ENCODE measurements at regions of chr16 and their contacts with region 1.

Region 1: DNA sequence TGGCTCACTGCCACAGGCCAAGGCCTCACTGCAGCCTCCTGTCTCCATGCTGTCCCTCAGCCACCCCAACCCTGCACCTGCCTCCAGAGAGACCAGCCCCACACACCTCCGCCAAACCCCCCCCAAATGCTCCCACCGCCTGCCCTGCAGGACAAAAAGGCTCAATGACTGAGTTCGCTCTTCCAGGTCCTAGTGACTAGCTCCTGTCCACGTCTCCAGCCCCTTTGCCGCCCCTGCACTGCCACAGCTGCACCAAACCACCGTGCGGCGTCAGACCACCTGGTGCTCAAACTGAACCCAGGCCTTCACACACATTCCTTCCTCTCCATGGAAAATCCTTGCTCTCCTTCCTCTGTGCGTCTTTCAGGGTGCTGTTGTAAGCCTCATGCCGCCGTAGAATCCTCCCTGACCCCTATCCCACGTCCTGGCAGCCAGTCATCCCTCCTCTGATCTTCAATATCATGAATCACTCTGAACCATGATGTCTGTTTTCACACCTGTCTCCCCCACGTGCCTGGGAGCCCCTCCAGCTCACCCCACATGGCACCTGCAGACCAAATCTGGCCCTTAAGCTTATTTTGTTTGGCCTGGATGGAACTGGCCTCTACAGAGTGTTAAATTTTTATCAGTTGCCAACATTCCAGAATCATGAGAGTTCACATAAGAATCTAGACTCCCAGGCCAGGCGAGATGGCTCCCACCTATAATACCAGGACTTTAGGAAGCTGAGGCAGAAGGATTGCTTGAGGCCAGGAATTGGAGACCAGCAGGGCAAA is 4.3 kb upstream of the GSG1L start:
- DNase-seq: no peak
- H3K4me3 ChIP-seq: no peak overlapping the region
- H3K27ac ChIP-seq: no peak overlapping the region
- H3K27me3 ChIP-seq: peaks cover 36% of the 10 kb centered on the region
- CTCF ChIP-seq: no peak

Region 2: GRCh38 chr16:27611340-27611739 is 456.5 kb before region 1 on chr16:
- CTCF ChIA-PET with region 1: interaction called, 7 read pairs
- POLR2A ChIA-PET with region 1: interaction called, 14 read pairs
- DNase-seq: no peak
- H3K4me3 ChIP-seq: no peak overlapping the region
- H3K27ac ChIP-seq: no peak overlapping the region
- H3K27me3 ChIP-seq: no peaks in the 10 kb centered on the region
- CTCF ChIP-seq: no peak

Region 3: DNA sequence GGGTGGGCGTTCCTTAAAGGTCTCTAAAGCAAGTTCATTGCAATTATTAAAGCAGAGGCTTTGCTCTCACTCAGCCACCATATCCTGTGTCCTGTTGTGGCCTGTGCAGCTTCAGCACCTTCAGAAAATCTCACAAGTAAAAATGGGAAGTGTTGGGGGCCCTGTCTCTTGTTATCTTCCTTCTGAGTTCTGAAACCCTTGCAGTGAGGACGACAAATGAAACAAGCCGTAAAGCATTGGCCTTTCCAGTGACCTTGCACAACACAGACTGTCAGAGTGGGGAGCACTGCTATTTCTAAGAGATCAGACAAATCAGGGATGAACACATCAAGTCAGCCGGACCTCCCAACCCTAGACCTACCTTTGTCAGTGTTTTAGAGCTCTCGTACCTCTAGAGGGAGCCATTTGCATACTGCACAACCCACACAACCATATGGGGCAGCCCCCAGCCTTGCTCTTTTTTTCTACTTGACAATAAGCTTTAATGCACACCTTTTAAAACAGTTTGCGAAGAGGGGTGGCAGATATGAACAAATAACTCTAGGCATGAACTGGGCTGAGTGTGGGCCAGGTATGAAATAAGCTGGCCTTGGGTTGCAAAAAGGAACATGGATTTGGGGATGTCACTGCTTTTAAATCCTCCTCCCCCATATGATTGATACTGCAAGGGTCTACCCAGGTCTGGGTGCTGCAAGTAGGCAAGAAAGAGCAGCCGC is 428.1 kb before region 1 on chr16:
- CTCF ChIA-PET with region 1: interaction called, 36 read pairs
- POLR2A ChIA-PET with region 1: no interaction called
- DNase-seq: peak; percentile 18
- H3K4me3 ChIP-seq: no peak overlapping the region
- H3K27ac ChIP-seq: no peak overlapping the region
- H3K27me3 ChIP-seq: no peaks in the 10 kb centered on the region
- CTCF ChIP-seq: peak; percentile 89

Region 4: GRCh38 chr16:27779641-27780164 is 288.1 kb before region 1 on chr16:
- CTCF ChIA-PET with region 1: interaction called, 69 read pairs
- POLR2A ChIA-PET with region 1: no interaction called
- DNase-seq: no peak
- H3K4me3 ChIP-seq: no peak overlapping the region
- H3K27ac ChIP-seq: no peak overlapping the region
- H3K27me3 ChIP-seq: no peaks in the 10 kb centered on the region
- CTCF ChIP-seq: peak; percentile 75

Region 5: GRCh38 chr16:27972500-27972899 is 95.3 kb before region 1 on chr16:
- CTCF ChIA-PET with region 1: interaction called, 40 read pairs
- POLR2A ChIA-PET with region 1: interaction called, 3 read pairs
- DNase-seq: no peak
- H3K4me3 ChIP-seq: no peak overlapping the region
- H3K27ac ChIP-seq: no peak overlapping the region
- H3K27me3 ChIP-seq: no peaks in the 10 kb centered on the region
- CTCF ChIP-seq: peak; percentile 52

Region 6: GRCh38 chr16:28218104-28218503 is 150.3 kb after region 1 on chr16:
- CTCF ChIA-PET with region 1: interaction called, 18 read pairs
- POLR2A ChIA-PET with region 1: no interaction called
- DNase-seq: peak; percentile 18
- H3K4me3 ChIP-seq: no peak overlapping the region
- H3K27ac ChIP-seq: no peak overlapping the region
- H3K27me3 ChIP-seq: no peaks in the 10 kb centered on the region
- CTCF ChIP-seq: peak; percentile 68

Measured in AG04450 (cell line).